ENCODE measurements at regions of chr13 and their contacts with region 1.

Region 1: GRCh38 chr13:46052319-46053161 is at the start of gene ZC3H13:
- DNase-seq: peak; percentile 93 to 99 (median 97)

Region 2: GRCh38 chr13:46126552-46127357 is 74.2 kb after region 1 on chr13:
- intact Hi-C with region 1: loop called (anchors 10 kb)
- DNase-seq: peak; percentile 24 to 95 (median 86)

Region 3: GRCh38 chr13:46213242-46213641 is 160.7 kb after region 1 on chr13:
- intact Hi-C with region 1: no loop called
- DNase-seq: no peak